ENCODE measurements at regions of chr3 and their contacts with region 1.

Region 1: DNA sequence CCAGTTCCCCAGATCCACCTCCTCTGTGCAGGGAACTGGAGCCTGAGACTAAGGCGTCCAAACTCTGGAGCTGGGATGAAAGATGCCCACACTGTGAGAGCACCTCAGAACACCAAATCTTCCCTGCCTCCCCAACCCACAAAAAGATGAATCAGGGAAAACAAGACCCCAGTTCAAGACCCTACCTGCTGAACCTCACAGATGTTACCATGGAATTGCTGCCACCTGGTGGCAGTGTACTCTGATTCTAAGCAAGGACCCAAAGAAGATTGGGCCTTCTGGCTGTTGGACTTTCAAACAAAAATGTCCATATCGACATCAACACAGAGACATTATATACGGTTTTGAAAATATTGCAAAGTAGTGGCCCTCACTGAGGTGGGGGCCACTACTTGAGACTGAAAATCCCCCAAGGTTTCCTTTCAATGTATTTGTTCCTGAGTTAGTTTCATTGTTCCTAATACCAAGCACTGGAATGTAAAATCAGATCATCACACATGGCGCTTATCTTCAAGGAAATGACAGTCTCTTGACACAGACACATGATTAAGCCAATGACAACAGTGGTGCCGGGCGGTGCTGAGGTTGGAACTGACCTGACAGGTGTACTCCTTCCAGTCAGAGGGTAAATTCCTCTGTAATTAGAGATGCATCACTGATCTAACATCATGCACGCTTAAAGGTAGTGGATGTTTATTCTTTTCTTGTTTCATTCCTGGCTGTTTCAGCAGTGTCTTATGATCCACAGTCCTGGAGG is 67.6 kb downstream of the SLC6A11 start:
- DNase-seq: peak; percentile 37
- ATAC-seq: no peak
- H3K4me3 Mint-ChIP-seq: no peak overlapping the region
- H3K27ac Mint-ChIP-seq: no peak overlapping the region
- H3K4me1 Mint-ChIP-seq: no peaks in the 10 kb centered on the region
- H3K27me3 Mint-ChIP-seq: peaks cover 13% of the 10 kb centered on the region

Region 2: GRCh38 chr3:10835406-10835805 is 48.2 kb before region 1 on chr3:
- CTCF ChIA-PET with region 1: interaction called, 3 read pairs
- POLR2A ChIA-PET with region 1: no interaction called
- intact Hi-C with region 1: loop called in 1 of 2 experiments (anchors 1 kb)
- DNase-seq: peak; percentile 17
- ATAC-seq: no peak
- H3K4me3 Mint-ChIP-seq: no peak overlapping the region
- H3K27ac Mint-ChIP-seq: no peak overlapping the region
- H3K4me1 Mint-ChIP-seq: no peaks in the 10 kb centered on the region
- H3K27me3 Mint-ChIP-seq: peaks cover 12% of the 10 kb centered on the region

Region 3: DNA sequence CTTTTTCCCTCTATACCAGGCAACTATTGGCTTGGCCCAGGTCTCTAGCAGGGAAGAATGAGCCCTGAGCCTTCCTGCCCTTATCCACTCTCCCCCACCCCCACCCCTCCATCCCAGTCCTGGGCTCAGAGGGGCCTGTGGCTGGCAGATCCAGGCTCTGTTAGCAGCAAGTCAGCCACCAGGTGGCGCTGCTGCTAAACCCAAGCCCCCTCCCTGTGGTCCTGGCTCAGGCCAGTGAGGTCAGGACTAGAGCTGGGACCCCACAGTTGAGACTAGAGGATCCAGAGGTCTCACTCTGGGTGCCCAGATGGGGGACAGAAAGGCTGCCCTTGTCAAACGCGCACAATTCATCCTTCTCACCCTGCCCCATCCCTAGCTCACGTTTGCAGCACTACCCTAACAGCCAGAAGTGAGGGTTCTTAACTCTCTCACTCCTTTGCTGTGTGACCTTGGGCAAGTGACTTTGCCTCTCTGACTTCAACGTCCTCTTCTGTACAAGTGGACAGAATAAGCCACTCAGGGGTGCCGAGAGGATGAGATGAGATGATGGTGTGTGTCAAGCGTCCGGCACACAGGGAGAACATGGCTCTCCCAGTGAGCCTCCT is 62.1 kb after region 1 on chr3:
- CTCF ChIA-PET with region 1: no interaction called
- POLR2A ChIA-PET with region 1: no interaction called
- intact Hi-C with region 1: no loop called
- DNase-seq: peak; percentile 79
- ATAC-seq: peak; percentile 83
- H3K4me3 Mint-ChIP-seq: no peak overlapping the region
- H3K27ac Mint-ChIP-seq: no peak overlapping the region
- H3K4me1 Mint-ChIP-seq: no peaks in the 10 kb centered on the region
- H3K27me3 Mint-ChIP-seq: peaks cover 5% of the 10 kb centered on the region

Measured in activated CD4-positive, alpha-beta T cell treated with anti-CD3 and anti-CD28 coated beads for 36 hours (primary cell).